H1 (cell line): ENCODE measurements at regions of chr18 and their contacts with region 1.

Region 1: GRCh38 chr18:63439334-63439733 is 17.1 kb upstream of the VPS4B start:
- DNase-seq: peak; percentile 43 to 61
- H3K4me3 ChIP-seq: no peak overlapping the region
- H3K27ac ChIP-seq: no peak overlapping the region
- H3K4me1 ChIP-seq: no peaks in the 10 kb centered on the region
- H3K27me3 ChIP-seq: no peaks in the 10 kb centered on the region
- CTCF ChIP-seq: peak; percentile 13 to 83 (median 70)
- EP300 ChIP-seq: no peak
- POLR2A ChIP-seq: no peak
- RAD21 ChIP-seq: peak; percentile 86

Region 2: DNA sequence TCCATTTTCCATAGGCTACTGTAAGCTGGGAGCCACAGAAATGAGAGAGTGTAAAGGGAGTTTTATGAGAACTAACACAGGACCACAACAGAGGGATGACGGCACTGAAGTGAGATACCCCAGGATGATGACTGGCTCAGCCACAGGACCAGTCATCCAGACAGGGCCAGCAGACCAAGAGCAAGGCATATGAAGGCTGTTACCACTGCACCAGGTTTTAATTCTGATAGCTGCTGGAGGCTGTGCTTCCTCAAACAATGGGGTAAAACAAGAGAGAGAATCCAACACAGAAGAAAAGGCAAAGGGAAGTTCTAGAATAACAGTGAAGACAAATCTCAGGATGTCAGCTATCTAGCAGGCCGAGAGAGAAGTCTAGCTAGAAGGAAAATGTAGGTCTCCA is 214.7 kb before region 1 on chr18:
- CTCF ChIA-PET with region 1: no interaction called
- POLR2A ChIA-PET with region 1: no interaction called
- DNase-seq: no peak
- H3K4me3 ChIP-seq: no peak overlapping the region
- H3K27ac ChIP-seq: no peak overlapping the region
- H3K4me1 ChIP-seq: no peaks in the 10 kb centered on the region
- H3K27me3 ChIP-seq: no peaks in the 10 kb centered on the region
- CTCF ChIP-seq: no peak
- EP300 ChIP-seq: no peak
- POLR2A ChIP-seq: no peak
- RAD21 ChIP-seq: no peak

Region 3: GRCh38 chr18:63339920-63340484 is 99.3 kb before region 1 on chr18:
- CTCF ChIA-PET with region 1: interaction called, 35 read pairs
- POLR2A ChIA-PET with region 1: no interaction called
- DNase-seq: peak in 1 of 2 experiments; percentile 62
- H3K4me3 ChIP-seq: peak overlapping the region in 1 of 4 experiments; percentile 41; a peak in 2 of 8 replicates
- H3K27ac ChIP-seq: no peak overlapping the region
- H3K4me1 ChIP-seq: peaks cover 0 to 7% (median 3%) of the 10 kb centered on the region in 4 experiments; a peak in 3 of 7 replicates
- H3K27me3 ChIP-seq: no peaks in the 10 kb centered on the region
- CTCF ChIP-seq: peak in 2 of 3 experiments; percentile 51 to 60; a peak in 3 of 4 replicates
- EP300 ChIP-seq: no peak
- POLR2A ChIP-seq: no peak
- RAD21 ChIP-seq: peak; percentile 67 to 72

Region 4: DNA sequence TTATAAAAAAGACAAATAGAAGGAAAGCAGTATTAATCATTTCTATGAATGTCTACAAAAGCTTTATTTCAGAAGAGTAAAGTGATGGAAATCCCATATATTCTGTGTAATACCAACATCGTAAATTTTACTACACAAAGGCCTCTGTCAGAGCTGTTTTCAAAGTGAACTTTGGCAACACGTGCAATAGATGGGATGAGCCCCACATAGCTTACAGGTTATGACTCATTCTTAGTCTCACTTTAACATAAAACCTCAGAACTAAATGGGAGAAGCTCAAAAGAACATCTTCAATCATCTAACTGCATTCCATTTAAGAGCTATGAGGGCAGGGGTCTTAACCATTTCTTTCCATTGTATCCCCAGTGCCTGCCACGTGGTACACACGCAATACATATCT is 28.5 kb before region 1 on chr18:
- CTCF ChIA-PET with region 1: interaction called, 15 read pairs
- POLR2A ChIA-PET with region 1: interaction called, 3 read pairs
- DNase-seq: no peak
- H3K4me3 ChIP-seq: no peak overlapping the region
- H3K27ac ChIP-seq: no peak overlapping the region
- H3K4me1 ChIP-seq: no peaks in the 10 kb centered on the region
- H3K27me3 ChIP-seq: no peaks in the 10 kb centered on the region
- CTCF ChIP-seq: no peak
- EP300 ChIP-seq: no peak
- POLR2A ChIP-seq: no peak
- RAD21 ChIP-seq: no peak

Region 5: GRCh38 chr18:63505566-63506335 is 66.4 kb after region 1 on chr18:
- CTCF ChIA-PET with region 1: interaction called, 23 read pairs
- POLR2A ChIA-PET with region 1: no interaction called
- DNase-seq: peak in 1 of 2 experiments; percentile 81
- H3K4me3 ChIP-seq: no peak overlapping the region
- H3K27ac ChIP-seq: no peak overlapping the region
- H3K4me1 ChIP-seq: no peaks in the 10 kb centered on the region; a peak in 1 of 7 replicates
- H3K27me3 ChIP-seq: no peaks in the 10 kb centered on the region
- CTCF ChIP-seq: peak in 2 of 3 experiments; percentile 66 to 88; a peak in 3 of 4 replicates
- EP300 ChIP-seq: no peak
- POLR2A ChIP-seq: no peak
- RAD21 ChIP-seq: peak; percentile 59 to 70

Region 6: DNA sequence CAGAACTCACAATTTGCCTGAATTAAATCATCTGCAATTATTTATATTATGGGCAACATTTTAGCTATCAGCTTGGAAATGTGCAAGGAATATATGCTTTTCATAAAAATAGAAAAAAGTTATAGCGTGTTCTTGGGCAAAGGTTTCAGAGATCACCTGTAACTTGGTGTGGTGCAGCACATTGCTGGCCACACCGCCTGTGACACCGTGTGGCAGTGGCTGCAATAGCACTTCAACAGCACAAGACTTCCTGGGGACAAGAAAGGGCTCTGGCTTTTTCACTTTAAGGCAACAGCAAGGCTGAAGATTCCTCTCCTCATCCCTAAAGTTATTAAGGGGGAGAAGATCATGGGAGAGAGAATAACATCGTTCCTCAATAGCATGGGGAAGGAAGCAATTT is 237.2 kb after region 1 on chr18:
- CTCF ChIA-PET with region 1: no interaction called
- POLR2A ChIA-PET with region 1: no interaction called
- DNase-seq: no peak
- H3K4me3 ChIP-seq: no peak overlapping the region
- H3K27ac ChIP-seq: no peak overlapping the region
- H3K4me1 ChIP-seq: no peaks in the 10 kb centered on the region
- H3K27me3 ChIP-seq: no peaks in the 10 kb centered on the region
- CTCF ChIP-seq: peak; percentile 66 to 81 (median 77)
- EP300 ChIP-seq: no peak
- POLR2A ChIP-seq: no peak
- RAD21 ChIP-seq: peak; percentile 74 to 76